Caco-2 (cell line): ENCODE measurements at regions of chr3 and their contacts with region 1.

Region 1: DNA sequence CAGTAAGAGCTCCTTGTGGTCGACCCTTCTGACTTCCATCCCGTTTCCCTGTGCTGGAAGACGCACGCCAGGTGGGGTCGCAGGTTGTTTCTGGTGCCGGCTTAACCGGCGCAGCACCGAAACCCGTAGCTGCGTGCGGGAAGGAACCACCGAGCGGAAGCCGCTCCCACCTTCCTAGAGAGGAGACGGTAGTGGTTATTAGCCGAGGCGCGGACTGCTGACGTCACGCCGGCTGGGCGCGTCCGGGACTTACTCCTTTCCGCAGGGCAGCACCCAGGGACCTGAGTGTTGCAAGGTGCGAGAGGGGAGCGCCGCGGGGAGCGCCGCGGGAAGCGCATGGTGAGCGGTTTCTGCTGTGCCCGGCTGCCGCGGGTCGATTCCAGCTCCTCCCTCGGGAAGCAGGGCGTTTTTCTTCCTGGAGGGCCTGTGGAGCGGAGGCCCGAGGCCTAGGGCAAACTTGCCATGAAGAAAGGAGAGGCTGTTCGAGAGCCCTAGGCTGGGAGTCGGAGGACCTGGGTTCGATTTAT is at the start of gene ZNF501:
- DNase-seq: peak; percentile 94 to 95
- H3K4me3 ChIP-seq: peak within 1 kb of the TSS; percentile 83
- H3K4me3 Mint-ChIP-seq: peak within 1 kb of the TSS; percentile 96
- H3K27ac Mint-ChIP-seq: peak within 1 kb of the TSS; percentile 97
- H3K4me1 ChIP-seq: no peaks in the 10 kb centered on the region; the same call in 1 of the 2 replicates
- H3K4me1 Mint-ChIP-seq: no peaks in the 10 kb centered on the region
- H3K27me3 ChIP-seq: no peaks in the 10 kb centered on the region
- H3K27me3 Mint-ChIP-seq: no peaks in the 10 kb centered on the region
- CTCF ChIP-seq: peak in 1 of 2 experiments; percentile 16
- total RNA-seq, gene ZNF501: 3.2 and 3.3 TPM in 2 replicates

Region 2: GRCh38 chr3:44712455-44713075 is 16.9 kb before region 1 on chr3 and contains the start of gene ZNF502:
- CTCF ChIA-PET with region 1: interaction called, 5 read pairs
- POLR2A ChIA-PET with region 1: interaction called, 6 read pairs
- intact Hi-C with region 1: loop called (anchors 1 kb)
- DNase-seq: peak; percentile 80 to 83
- H3K4me3 ChIP-seq: peak within 1 kb of the TSS; percentile 67
- H3K4me3 Mint-ChIP-seq: peak within 1 kb of the TSS; percentile 87
- H3K27ac Mint-ChIP-seq: peak within 1 kb of the TSS; percentile 85
- H3K4me1 ChIP-seq: no peaks in the 10 kb centered on the region
- H3K4me1 Mint-ChIP-seq: no peaks in the 10 kb centered on the region
- H3K27me3 ChIP-seq: no peaks in the 10 kb centered on the region
- H3K27me3 Mint-ChIP-seq: no peaks in the 10 kb centered on the region
- CTCF ChIP-seq: peak in 1 of 2 experiments; percentile 36
- total RNA-seq, gene ZNF502: 2.0 TPM in 2 replicates

Region 3: DNA sequence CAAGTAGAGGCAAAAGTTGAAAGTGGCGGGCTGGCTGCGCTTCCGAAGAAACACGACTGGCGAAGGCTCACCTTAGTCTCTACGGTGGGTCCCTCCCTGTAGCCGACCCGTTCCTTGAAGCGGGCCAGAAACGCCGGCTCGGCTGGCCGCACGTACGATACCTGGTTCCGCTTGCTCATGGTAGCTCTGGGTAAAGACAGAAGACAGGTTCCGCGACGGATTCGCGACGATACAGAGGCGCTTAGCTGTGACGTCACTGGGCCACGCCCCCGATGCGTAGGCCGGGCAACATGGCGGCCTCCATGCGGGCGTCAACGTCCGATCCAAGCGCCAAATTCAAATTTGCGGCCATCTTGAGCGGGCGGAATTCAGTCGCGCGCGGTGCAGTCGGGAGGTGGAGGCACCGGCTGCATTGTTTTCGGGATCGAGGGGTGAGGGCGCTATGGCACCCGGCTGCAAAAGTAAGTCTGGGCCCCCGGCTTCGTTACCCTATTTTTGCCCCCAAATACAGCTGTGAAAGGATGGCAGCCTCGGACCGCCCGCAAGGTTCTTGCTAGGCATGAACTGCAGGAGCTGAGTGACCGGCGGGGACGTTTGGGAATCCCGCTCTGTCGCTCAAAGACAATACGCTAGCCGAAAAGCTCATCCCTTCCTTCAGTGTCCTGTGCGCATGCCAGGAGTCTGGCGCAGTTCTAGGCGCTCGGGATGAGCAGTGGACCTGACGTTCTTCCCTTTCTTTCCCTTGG is 32.1 kb after region 1 on chr3 and contains the starts of genes KIAA1143 and KIF15:
- CTCF ChIA-PET with region 1: no interaction called
- POLR2A ChIA-PET with region 1: interaction called, 4 read pairs
- intact Hi-C with region 1: loop called (anchors 1 kb)
- DNase-seq: peak; percentile 95 to 96
- H3K4me3 ChIP-seq: peak within 1 kb of the TSS; percentile 75
- H3K4me3 Mint-ChIP-seq: peak within 1 kb of the TSS; percentile 93
- H3K27ac Mint-ChIP-seq: peak within 1 kb of the TSS; percentile 94
- H3K4me1 ChIP-seq: no peaks in the 10 kb centered on the region; the same call in 1 of the 2 replicates
- H3K4me1 Mint-ChIP-seq: no peaks in the 10 kb centered on the region
- H3K27me3 ChIP-seq: no peaks in the 10 kb centered on the region
- H3K27me3 Mint-ChIP-seq: no peaks in the 10 kb centered on the region
- CTCF ChIP-seq: no peak
- total RNA-seq, gene KIAA1143: 29.0 and 29.8 TPM in 2 replicates
- total RNA-seq, gene KIF15: 22.4 and 25.3 TPM in 2 replicates